ENCODE measurements at regions of chr9 and their contacts with region 1.

Region 1: GRCh38 chr9:120714088-120714845 is at the start of gene MEGF9:
- DNase-seq: peak; percentile 98
- ATAC-seq: peak; percentile 92 to 93
- H3K4me3 ChIP-seq: peak within 1 kb of the TSS; percentile 74 to 90 (median 82)
- H3K27ac ChIP-seq: peak within 1 kb of the TSS; percentile 72 to 76 (median 74)
- H3K4me1 ChIP-seq: peaks cover 31 to 43% of the 10 kb centered on the region in 2 donors
- H3K27me3 ChIP-seq: no peaks in the 10 kb centered on the region
- CTCF ChIP-seq: peak in 2 of 5 experiments; percentile 16 to 17
- POLR2A ChIP-seq: peak; percentile 79 to 92
- total RNA-seq, gene MEGF9: 6.3 to 15.3 (median 13.5) TPM

Region 2: GRCh38 chr9:120619751-120620655 is 94.3 kb before region 1 on chr9:
- in situ Hi-C with region 1: no loop called
- intact Hi-C with region 1: loop called (anchors 5 kb)
- DNase-seq: peak; percentile 20 to 33
- ATAC-seq: peak; percentile 89 to 97
- H3K4me3 ChIP-seq: no peak overlapping the region
- H3K27ac ChIP-seq: peak overlapping the region in 1 of 4 donors; percentile 29
- H3K4me1 ChIP-seq: no peaks in the 10 kb centered on the region
- H3K27me3 ChIP-seq: no peaks in the 10 kb centered on the region
- CTCF ChIP-seq: peak; percentile 57 to 84 (median 73)
- POLR2A ChIP-seq: no peak

Region 3: DNA sequence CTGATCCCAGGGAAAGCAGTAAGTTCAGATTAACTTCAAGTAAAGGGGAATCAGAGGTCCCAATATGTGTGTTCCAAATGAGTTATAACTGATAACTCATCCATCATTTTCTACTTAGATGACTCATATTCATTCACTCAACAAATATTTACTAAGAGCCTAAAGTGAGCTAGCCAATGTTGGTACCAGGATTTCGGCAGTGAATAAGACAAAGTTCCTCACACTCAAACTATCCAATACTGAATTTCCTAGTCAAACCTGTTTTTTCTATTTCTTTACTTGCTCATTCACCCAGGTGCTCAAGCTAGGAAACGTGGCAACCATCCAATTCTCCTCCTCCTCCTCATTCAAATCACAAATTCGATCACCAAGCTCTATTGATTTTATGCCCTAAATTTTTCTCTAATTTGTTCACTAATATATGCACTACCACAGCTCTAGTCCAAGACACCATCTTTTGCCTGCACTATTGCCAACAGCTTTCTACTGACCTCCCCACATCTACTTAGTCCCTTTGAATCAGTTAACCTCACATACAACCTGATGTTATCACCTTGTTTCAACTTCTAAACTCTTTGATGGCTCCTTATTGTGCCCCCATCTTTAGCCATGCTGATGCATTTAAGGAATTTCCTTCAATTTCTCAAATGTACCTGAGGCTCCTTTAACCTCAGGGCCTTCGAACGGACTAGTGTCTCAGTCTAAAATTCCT is 53.3 kb after region 1 on chr9:
- in situ Hi-C with region 1: no loop called
- intact Hi-C with region 1: no loop called
- DNase-seq: no peak
- ATAC-seq: no peak
- H3K4me3 ChIP-seq: no peak overlapping the region
- H3K27ac ChIP-seq: no peak overlapping the region
- H3K4me1 ChIP-seq: no peaks in the 10 kb centered on the region
- H3K27me3 ChIP-seq: no peaks in the 10 kb centered on the region
- CTCF ChIP-seq: no peak
- POLR2A ChIP-seq: no peak

Region 4: GRCh38 chr9:121059998-121060636 is 345.9 kb after region 1 on chr9:
- in situ Hi-C with region 1: no loop called
- intact Hi-C with region 1: no loop called
- DNase-seq: no peak
- ATAC-seq: peak; percentile 42 to 44
- H3K4me3 ChIP-seq: no peak overlapping the region
- H3K27ac ChIP-seq: no peak overlapping the region
- H3K4me1 ChIP-seq: no peaks in the 10 kb centered on the region
- H3K27me3 ChIP-seq: no peaks in the 10 kb centered on the region
- CTCF ChIP-seq: peak; percentile 50 to 76 (median 73)
- POLR2A ChIP-seq: no peak

Measured in gastrocnemius medialis (tissue), 4 donors.